ENCODE measurements at regions of chr12 and their contacts with region 1.

Region 1: DNA sequence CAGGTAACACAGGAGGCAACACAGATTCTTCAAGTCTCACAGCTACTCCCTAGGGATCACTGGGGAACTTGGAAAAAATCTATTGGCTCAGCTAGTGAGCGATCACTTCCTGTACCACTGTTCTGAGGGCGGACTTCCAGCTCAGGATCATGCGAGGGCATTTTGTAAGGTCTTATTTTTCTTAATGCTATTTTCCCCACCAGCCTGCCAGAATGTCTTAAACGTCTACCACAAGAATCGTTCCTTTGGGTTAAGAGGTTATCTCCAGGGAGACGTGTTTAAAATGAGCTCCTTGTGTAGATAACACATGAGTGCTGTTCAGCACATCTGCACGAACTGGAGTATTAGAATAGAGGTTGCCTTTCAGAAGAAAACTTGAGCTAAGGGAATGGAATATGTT is 162.6 kb downstream of the ETNK1 start:
- DNase-seq: no peak
- H3K4me3 ChIP-seq: no peak overlapping the region
- H3K27ac ChIP-seq: no peak overlapping the region
- H3K4me1 ChIP-seq: no peaks in the 10 kb centered on the region
- H3K27me3 ChIP-seq: no peaks in the 10 kb centered on the region
- CTCF ChIP-seq: no peak

Region 2: DNA sequence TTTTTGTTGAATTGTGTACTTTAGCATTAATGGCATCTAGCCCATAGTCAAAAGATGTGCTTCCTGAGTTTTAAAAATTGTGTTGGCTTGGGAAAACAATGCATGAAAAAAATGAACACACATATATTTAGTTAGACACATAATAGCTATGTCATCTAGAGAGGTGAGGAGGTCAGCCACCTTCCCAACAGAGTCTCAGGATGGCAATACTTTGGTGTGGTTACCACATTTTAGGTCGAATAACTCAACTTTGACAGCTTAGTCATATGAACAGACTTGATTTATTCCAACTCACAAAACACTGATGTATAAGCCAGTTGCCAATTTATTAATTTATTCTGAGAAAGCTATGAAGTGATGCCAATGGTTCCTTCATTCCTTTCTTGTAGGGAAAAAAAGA is 48.6 kb before region 1 on chr12:
- CTCF ChIA-PET with region 1: no interaction called
- POLR2A ChIA-PET with region 1: no interaction called
- intact Hi-C with region 1: loop called (anchors 1 kb)
- DNase-seq: no peak
- H3K4me3 ChIP-seq: no peak overlapping the region
- H3K27ac ChIP-seq: no peak overlapping the region
- H3K4me1 ChIP-seq: no peaks in the 10 kb centered on the region
- H3K27me3 ChIP-seq: no peaks in the 10 kb centered on the region
- CTCF ChIP-seq: no peak